ENCODE measurements at regions of chr17 and their contacts with region 1.

Region 1: GRCh38 chr17:36601303-36602029 is at the start of gene MRM1:
- DNase-seq: peak; percentile 86
- ATAC-seq: peak; percentile 84
- H3K4me3 ChIP-seq: peak within 1 kb of the TSS; percentile 71 to 90 (median 72)
- H3K27ac ChIP-seq: peak within 1 kb of the TSS; percentile 91
- H3K4me1 ChIP-seq: peaks cover 42% of the 10 kb centered on the region
- H3K27me3 ChIP-seq: no peaks in the 10 kb centered on the region; a peak in 1 of 5 replicates
- CTCF ChIP-seq: peak; percentile 67
- EP300 ChIP-seq: no peak
- POLR2A ChIP-seq: peak; percentile 86 to 91
- RAD21 ChIP-seq: no peak; the same call in 1 of the 2 replicates
- total RNA-seq, gene MRM1: 10.7 and 11.3 TPM in 2 replicates

Region 2: GRCh38 chr17:37239690-37240334 is 638.3 kb after region 1 on chr17:
- CTCF ChIA-PET with region 1: no interaction called
- POLR2A ChIA-PET with region 1: no interaction called
- in situ Hi-C with region 1: loop called (anchors 25 kb)
- intact Hi-C with region 1: no loop called
- DNase-seq: peak; percentile 8
- ATAC-seq: no peak; the same call in 2 of the 3 replicates
- H3K4me3 ChIP-seq: no peak overlapping the region
- H3K27ac ChIP-seq: no peak overlapping the region
- H3K4me1 ChIP-seq: no peaks in the 10 kb centered on the region
- H3K27me3 ChIP-seq: no peaks in the 10 kb centered on the region
- CTCF ChIP-seq: peak; percentile 55
- EP300 ChIP-seq: no peak
- POLR2A ChIP-seq: no peak
- RAD21 ChIP-seq: no peak